ENCODE measurements at regions of chr11 and their contacts with region 1.

Region 1: GRCh38 chr11:44519989-44520737 is 45.3 kb upstream of the CD82 start:
- DNase-seq: no peak
- H3K4me3 ChIP-seq: no peak overlapping the region
- H3K27ac ChIP-seq: no peak overlapping the region
- H3K4me1 ChIP-seq: no peaks in the 10 kb centered on the region
- H3K27me3 ChIP-seq: no peaks in the 10 kb centered on the region
- CTCF ChIP-seq: no peak

Region 2: GRCh38 chr11:44269369-44270351 is 250.5 kb before region 1 on chr11:
- CTCF ChIA-PET with region 1: no interaction called
- dilution Hi-C with region 1: loop called (anchors 10 kb)
- in situ Hi-C with region 1: no loop called
- intact Hi-C with region 1: no loop called
- DNase-seq: no peak
- H3K4me3 ChIP-seq: no peak overlapping the region
- H3K27ac ChIP-seq: no peak overlapping the region
- H3K4me1 ChIP-seq: no peaks in the 10 kb centered on the region
- H3K27me3 ChIP-seq: no peaks in the 10 kb centered on the region
- CTCF ChIP-seq: no peak

Region 3: GRCh38 chr11:44326615-44327475 is 193.3 kb before region 1 on chr11:
- CTCF ChIA-PET with region 1: no interaction called
- dilution Hi-C with region 1: loop called (anchors 10 kb)
- in situ Hi-C with region 1: no loop called
- intact Hi-C with region 1: no loop called
- DNase-seq: no peak
- H3K4me3 ChIP-seq: no peak overlapping the region
- H3K27ac ChIP-seq: no peak overlapping the region
- H3K4me1 ChIP-seq: no peaks in the 10 kb centered on the region
- H3K27me3 ChIP-seq: peaks cover 15% of the 10 kb centered on the region
- CTCF ChIP-seq: peak in 1 of 2 donors; percentile 27